ENCODE measurements at regions of chr13 and their contacts with region 1.

Region 1: DNA sequence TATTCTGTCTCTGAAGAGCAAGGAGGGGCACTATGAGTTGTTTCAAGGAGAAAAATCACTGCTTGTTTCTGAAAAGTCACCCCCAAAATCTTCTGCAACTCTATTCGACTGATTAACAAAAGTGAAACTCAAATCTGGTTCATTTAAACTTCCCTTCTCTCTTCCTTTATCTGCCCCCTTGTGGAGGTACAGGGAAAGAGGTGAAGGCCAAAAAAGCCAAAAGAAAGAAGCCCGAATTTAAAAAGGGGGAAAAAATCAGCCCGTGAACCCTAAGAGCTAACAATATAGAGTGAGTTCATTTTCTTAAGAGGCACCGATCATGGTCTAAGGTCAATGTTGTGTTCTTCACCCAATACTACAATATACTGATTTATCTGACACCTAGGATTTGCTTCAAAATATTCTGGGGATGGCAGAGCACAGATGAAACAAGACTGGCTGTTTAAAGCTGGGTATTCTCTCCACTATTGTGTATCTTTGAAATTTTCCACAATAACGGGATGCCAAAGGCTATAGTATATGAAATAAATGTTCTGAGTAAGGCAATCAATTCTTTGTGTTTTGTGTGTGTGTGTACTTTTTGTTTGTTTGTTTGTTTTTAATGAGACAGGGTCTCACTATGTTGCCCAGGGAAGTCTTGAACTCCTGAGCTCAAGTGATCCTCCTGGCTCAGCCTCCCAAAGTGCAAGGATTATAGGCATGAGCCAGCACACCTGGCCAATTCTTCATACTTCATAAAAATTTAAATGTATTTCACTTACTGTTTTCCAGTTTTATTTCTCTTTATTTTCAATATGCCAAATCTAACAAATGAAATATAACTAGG is 55.0 kb upstream of the EEF1AKMT1 start:
- DNase-seq: peak; percentile 76
- H3K4me3 Mint-ChIP-seq: peak overlapping the region; percentile 60
- H3K27ac Mint-ChIP-seq: peak overlapping the region; percentile 73
- H3K4me1 Mint-ChIP-seq: peaks cover 6% of the 10 kb centered on the region
- H3K27me3 Mint-ChIP-seq: no peaks in the 10 kb centered on the region
- CTCF ChIP-seq: peak; percentile 65

Region 2: GRCh38 chr13:20182231-20182846 is 646.4 kb before region 1 on chr13:
- CTCF ChIA-PET with region 1: interaction called, 6 read pairs
- POLR2A ChIA-PET with region 1: no interaction called
- intact Hi-C with region 1: loop called (anchors 2 kb)
- DNase-seq: peak; percentile 78
- H3K4me3 Mint-ChIP-seq: no peak overlapping the region
- H3K27ac Mint-ChIP-seq: no peak overlapping the region
- H3K4me1 Mint-ChIP-seq: peaks cover 7% of the 10 kb centered on the region
- H3K27me3 Mint-ChIP-seq: no peaks in the 10 kb centered on the region
- CTCF ChIP-seq: peak; percentile 79

Region 3: DNA sequence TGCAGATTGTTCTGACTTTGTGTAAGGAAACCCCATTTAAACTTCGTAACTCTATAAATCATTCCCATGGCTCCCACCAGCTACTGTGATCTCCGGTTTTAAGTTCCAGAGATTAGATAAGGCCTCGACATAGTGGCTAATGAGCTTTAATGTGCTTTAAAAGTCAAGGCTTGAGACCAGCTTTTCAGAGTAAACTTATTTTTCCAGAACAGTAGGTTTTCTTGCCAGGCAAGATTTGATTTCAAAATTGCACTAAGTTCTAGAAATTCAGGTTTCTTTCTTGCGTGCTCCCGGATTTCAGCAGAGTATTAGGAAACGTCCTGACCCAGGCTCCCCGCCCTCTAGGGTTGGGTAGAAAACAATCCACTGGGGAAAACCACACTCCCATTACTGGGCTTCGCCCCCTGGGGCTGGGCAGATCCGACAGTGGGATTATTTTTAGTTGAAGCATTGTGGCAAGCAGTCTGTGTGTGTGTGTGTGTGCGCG is 346.4 kb before region 1 on chr13:
- CTCF ChIA-PET with region 1: no interaction called
- POLR2A ChIA-PET with region 1: no interaction called
- intact Hi-C with region 1: no loop called
- DNase-seq: no peak
- H3K4me3 Mint-ChIP-seq: no peak overlapping the region
- H3K27ac Mint-ChIP-seq: peak overlapping the region; percentile 9
- H3K4me1 Mint-ChIP-seq: no peaks in the 10 kb centered on the region
- H3K27me3 Mint-ChIP-seq: no peaks in the 10 kb centered on the region
- CTCF ChIP-seq: no peak

Region 4: DNA sequence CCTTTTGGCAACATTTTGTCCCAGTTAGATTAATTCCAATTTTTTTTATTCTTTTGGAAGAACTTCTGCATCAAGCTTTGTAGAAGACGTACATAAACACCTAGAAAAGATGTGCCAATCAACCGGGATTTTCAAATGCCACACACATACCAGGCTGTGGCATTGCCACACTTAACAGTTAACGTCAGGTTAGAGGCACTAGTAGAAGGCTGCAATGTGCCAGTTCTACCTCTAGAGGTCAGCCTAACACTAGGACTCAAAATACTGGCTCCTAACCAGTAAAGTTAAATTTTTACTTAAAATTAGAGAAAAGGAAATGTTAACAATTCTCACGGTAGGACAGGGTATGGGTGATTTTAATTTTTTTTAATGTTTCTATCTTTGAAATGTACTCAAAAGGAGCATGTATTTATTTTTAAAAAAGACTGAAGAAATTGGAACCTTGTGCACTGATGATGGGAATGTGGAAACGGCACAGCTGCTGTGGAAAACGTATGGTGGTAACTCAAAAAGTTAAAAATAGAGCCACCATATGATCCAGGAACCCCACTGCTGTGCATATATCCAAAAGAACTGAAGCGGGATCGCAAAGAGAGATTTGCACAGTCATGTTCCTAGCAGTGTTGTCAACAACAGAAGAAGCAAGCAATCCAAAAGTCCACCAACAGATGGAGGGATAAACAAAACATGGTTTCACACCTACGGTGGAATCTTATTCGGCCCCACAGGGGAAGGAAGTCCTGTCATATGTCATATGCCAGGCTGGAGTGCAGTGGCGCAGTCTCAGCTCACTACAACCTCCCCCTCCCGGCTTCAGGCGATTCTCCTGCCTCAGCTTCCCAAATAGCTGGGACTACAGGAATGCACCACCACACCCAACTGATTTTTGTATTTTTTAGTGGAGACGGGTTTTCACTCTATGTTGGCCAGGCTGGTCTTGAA is 333.4 kb before region 1 on chr13:
- CTCF ChIA-PET with region 1: interaction called, 56 read pairs
- POLR2A ChIA-PET with region 1: no interaction called
- intact Hi-C with region 1: loop called (anchors 1 kb)
- DNase-seq: peak; percentile 77
- H3K4me3 Mint-ChIP-seq: no peak overlapping the region
- H3K27ac Mint-ChIP-seq: no peak overlapping the region
- H3K4me1 Mint-ChIP-seq: peaks cover 13% of the 10 kb centered on the region
- H3K27me3 Mint-ChIP-seq: no peaks in the 10 kb centered on the region
- CTCF ChIP-seq: peak; percentile 91

Region 5: DNA sequence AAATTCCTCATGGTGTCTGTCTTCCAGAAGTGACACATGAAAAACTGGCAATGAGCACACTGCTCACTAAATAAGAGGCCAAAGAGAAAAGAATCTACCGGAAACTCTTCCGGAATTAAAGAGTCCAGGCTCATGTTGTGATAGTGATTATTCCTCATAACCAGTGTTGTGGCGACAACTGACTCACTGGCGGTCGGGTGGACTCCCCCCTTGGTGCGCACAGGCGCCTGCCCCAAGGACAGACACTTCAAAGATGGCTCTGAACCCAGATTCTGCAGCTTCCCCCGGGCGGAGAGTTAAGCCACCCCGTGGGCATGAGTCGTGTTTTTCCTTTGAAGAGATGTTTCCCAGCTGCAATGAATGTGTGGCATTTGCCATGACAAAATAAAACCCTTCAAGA is 115.0 kb before region 1 on chr13:
- CTCF ChIA-PET with region 1: interaction called, 60 read pairs
- POLR2A ChIA-PET with region 1: no interaction called
- intact Hi-C with region 1: loop called (anchors 1 kb)
- DNase-seq: no peak
- H3K4me3 Mint-ChIP-seq: no peak overlapping the region
- H3K27ac Mint-ChIP-seq: no peak overlapping the region
- H3K4me1 Mint-ChIP-seq: peaks cover 19% of the 10 kb centered on the region
- H3K27me3 Mint-ChIP-seq: no peaks in the 10 kb centered on the region
- CTCF ChIP-seq: no peak

Region 6: DNA sequence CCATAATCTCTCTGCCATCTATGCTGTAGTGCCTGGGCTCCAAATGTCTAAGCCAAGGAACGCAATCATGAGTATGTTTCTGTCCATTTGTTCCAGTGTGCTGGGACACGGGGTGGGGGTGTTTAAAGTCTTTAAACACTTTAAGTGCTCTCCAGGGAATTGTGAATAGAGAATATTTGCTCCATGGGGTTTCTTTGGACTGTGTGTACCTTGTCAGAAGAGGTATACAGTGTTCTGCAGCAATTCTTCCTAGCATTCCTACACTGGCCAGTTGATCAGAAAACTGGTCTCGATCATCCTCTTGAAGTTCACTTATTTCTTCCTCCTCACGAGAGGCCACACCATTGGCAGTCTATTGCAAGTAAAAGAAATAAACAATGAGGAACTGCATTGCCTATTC is 19.9 kb before region 1 on chr13:
- CTCF ChIA-PET with region 1: interaction called, 11 read pairs
- POLR2A ChIA-PET with region 1: interaction called, 3 read pairs
- intact Hi-C with region 1: no loop called
- DNase-seq: no peak
- H3K4me3 Mint-ChIP-seq: no peak overlapping the region
- H3K27ac Mint-ChIP-seq: no peak overlapping the region
- H3K4me1 Mint-ChIP-seq: peaks cover 28% of the 10 kb centered on the region
- H3K27me3 Mint-ChIP-seq: no peaks in the 10 kb centered on the region
- CTCF ChIP-seq: no peak

Region 7: DNA sequence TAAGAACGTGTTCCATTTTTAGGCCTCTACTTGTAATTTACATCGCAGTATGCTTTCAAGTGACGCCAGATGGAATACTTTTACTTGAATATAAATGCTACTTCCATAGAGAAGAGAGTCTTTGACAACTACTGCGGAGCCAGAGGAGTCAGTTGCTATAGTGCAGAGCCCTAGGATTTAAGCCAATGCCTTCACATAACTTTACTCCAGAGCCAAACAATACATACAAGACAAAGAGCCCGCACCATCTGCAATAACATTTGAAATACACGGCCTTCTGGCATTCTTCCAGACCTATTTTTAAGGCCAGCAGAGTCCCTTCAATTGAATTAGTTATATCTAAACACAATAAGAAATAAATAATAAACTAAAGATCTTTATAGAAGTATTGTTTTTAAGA is 14.4 kb after region 1 on chr13:
- CTCF ChIA-PET with region 1: interaction called, 27 read pairs
- POLR2A ChIA-PET with region 1: interaction called, 5 read pairs
- intact Hi-C with region 1: no loop called
- DNase-seq: no peak
- H3K4me3 Mint-ChIP-seq: no peak overlapping the region
- H3K27ac Mint-ChIP-seq: no peak overlapping the region
- H3K4me1 Mint-ChIP-seq: no peaks in the 10 kb centered on the region
- H3K27me3 Mint-ChIP-seq: no peaks in the 10 kb centered on the region
- CTCF ChIP-seq: no peak